Activated naive CD4-positive, alpha-beta T cell treated with anti-CD3 and anti-CD28 coated beads for 36 hours (primary cell): ENCODE measurements at regions of chr1 and their contacts with region 1.

Region 1: DNA sequence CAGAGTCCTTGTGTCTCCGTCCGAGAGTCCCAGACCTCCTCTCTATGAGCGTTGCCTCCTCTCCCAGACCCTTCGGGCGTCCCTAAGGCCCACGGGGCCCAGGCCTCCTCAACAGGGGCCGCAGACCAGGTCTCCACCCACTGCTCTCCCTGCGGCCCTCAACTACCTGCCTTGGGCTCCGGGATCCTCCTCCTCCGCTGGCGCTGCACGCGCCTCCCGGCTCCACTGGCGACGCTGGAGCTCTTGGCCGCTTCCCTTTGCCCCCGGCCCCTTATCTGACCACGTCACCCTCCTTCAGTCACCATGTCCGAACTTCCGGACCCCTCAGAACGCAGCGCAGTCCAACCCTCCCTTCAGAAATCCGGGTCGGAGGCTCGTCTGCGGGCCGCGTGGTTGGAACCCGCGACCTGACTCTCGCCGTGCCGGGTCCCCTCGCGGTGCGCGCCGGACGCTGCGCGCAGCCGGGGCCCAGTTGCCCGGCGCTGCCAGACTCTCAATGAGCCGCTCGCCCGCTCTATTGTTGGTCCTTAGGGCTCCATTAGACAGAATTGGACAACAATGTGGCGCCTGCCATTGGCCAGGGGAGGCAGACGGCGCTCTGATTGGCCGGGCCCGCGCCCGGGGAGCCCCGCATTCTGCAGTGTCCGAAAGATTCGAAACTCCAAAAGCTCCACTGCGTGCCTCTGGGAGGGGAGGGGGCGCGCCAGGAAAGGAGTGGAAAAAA is at the start of gene DMRTA2:
- DNase-seq: no peak
- H3K4me3 Mint-ChIP-seq: peak within 1 kb of the TSS; percentile 80
- H3K27ac Mint-ChIP-seq: peak within 1 kb of the TSS; percentile 47
- H3K4me1 Mint-ChIP-seq: peaks cover 58% of the 10 kb centered on the region
- H3K27me3 Mint-ChIP-seq: peaks cover 77% of the 10 kb centered on the region
- total RNA-seq, gene DMRTA2: 0.07 TPM in 1 of 2 experiments, not detected in the other

Region 2: GRCh38 chr1:50605186-50605875 is 182.2 kb after region 1 on chr1:
- CTCF ChIA-PET with region 1: no interaction called
- intact Hi-C with region 1: loop called (anchors 5 kb)
- DNase-seq: peak; percentile 31
- H3K4me3 Mint-ChIP-seq: no peak overlapping the region
- H3K27ac Mint-ChIP-seq: no peak overlapping the region
- H3K4me1 Mint-ChIP-seq: no peaks in the 10 kb centered on the region
- H3K27me3 Mint-ChIP-seq: no peaks in the 10 kb centered on the region